ENCODE measurements at regions of chr19 and their contacts with region 1.

Region 1: GRCh38 chr19:38788478-38789243 is at the start of gene LGALS7B:
- DNase-seq: no peak
- H3K4me3 ChIP-seq: no peak within 1 kb of the TSS
- H3K4me3 Mint-ChIP-seq: no peak within 1 kb of the TSS
- H3K27ac ChIP-seq: no peak within 1 kb of the TSS
- H3K27ac Mint-ChIP-seq: no peak within 1 kb of the TSS
- H3K4me1 ChIP-seq: peaks cover 9% of the 10 kb centered on the region in 2 donors
- H3K4me1 Mint-ChIP-seq: peaks cover 7% of the 10 kb centered on the region
- H3K27me3 ChIP-seq: no peaks in the 10 kb centered on the region
- H3K27me3 Mint-ChIP-seq: peaks cover 0 to 3% (median 0%) of the 10 kb centered on the region in 3 donors
- CTCF ChIP-seq: no peak
- polyA plus RNA-seq, gene LGALS7B: not detected

Region 2: GRCh38 chr19:38769635-38770211 is 18.9 kb before region 1 on chr19:
- intact Hi-C with region 1: loop called in 1 of 2 experiments (anchors 2 kb)
- DNase-seq: peak; percentile 84 to 92 (median 87)
- H3K4me3 ChIP-seq: peak overlapping the region; percentile 27 to 75 (median 44)
- H3K4me3 Mint-ChIP-seq: peak overlapping the region; percentile 57 to 68
- H3K27ac ChIP-seq: peak overlapping the region; percentile 67 to 81
- H3K27ac Mint-ChIP-seq: peak overlapping the region; percentile 76 to 90 (median 86)
- H3K4me1 ChIP-seq: peaks cover 5 to 13% of the 10 kb centered on the region in 2 donors
- H3K4me1 Mint-ChIP-seq: peaks cover 5% of the 10 kb centered on the region
- H3K27me3 ChIP-seq: no peaks in the 10 kb centered on the region
- H3K27me3 Mint-ChIP-seq: peaks cover 0 to 4% (median 3%) of the 10 kb centered on the region in 3 donors
- CTCF ChIP-seq: peak; percentile 95

Measured in CD14-positive monocyte (primary cell).